GM12878 (cell line): ENCODE measurements at regions of chr14 and their contacts with region 1.

Region 1: GRCh38 chr14:98189062-98189461 is 1082.9 kb downstream of the BCL11B start:
- DNase-seq: no peak
- ATAC-seq: no peak
- H3K4me3 ChIP-seq: no peak overlapping the region
- H3K27ac ChIP-seq: no peak overlapping the region
- H3K4me1 ChIP-seq: no peaks in the 10 kb centered on the region
- H3K27me3 ChIP-seq: no peaks in the 10 kb centered on the region
- CTCF ChIP-seq: no peak
- EP300 ChIP-seq: no peak
- POLR2A ChIP-seq: no peak
- RAD21 ChIP-seq: no peak

Region 2: DNA sequence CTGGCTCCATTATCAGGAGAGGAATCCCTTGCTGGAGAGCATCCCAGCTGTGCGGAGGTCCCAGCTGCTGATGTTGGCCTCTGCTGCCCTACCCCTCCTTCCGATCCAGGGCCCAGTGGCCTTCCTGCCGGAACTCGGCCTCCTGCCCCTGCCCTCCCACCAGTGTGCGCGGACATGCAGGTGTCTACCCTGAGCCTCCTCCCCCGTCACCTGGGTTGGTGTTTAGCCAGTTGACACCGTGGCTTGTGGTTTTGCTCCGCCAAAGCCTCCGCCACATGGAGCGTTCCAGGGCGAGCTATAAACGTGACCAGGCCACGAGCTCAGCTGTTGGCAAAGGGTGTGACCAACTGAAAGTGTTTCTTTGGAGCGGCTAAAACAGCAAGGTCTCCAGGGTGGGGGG is 21.4 kb before region 1 on chr14:
- CTCF ChIA-PET with region 1: interaction called, 6 read pairs
- POLR2A ChIA-PET with region 1: interaction called, 10 read pairs
- RAD21 ChIA-PET with region 1: interaction called, 110 read pairs
- SMC1A ChIA-PET with region 1: interaction called, 24 read pairs
- in situ Hi-C with region 1: no loop called
- intact Hi-C with region 1: no loop called
- DNase-seq: no peak
- ATAC-seq: no peak
- H3K4me3 ChIP-seq: no peak overlapping the region
- H3K27ac ChIP-seq: no peak overlapping the region
- H3K4me1 ChIP-seq: peaks cover 5% of the 10 kb centered on the region
- H3K27me3 ChIP-seq: no peaks in the 10 kb centered on the region
- CTCF ChIP-seq: no peak
- EP300 ChIP-seq: no peak
- POLR2A ChIP-seq: no peak
- RAD21 ChIP-seq: no peak

Region 3: GRCh38 chr14:98203421-98203820 is 14.4 kb after region 1 on chr14:
- CTCF ChIA-PET with region 1: interaction called, 4 read pairs
- POLR2A ChIA-PET with region 1: interaction called, 14 read pairs
- RAD21 ChIA-PET with region 1: interaction called, 309 read pairs
- SMC1A ChIA-PET with region 1: interaction called, 47 read pairs
- in situ Hi-C with region 1: no loop called
- intact Hi-C with region 1: no loop called
- DNase-seq: no peak
- ATAC-seq: no peak
- H3K4me3 ChIP-seq: no peak overlapping the region
- H3K27ac ChIP-seq: no peak overlapping the region
- H3K4me1 ChIP-seq: peaks cover 3% of the 10 kb centered on the region
- H3K27me3 ChIP-seq: no peaks in the 10 kb centered on the region
- CTCF ChIP-seq: no peak
- EP300 ChIP-seq: no peak
- POLR2A ChIP-seq: no peak
- RAD21 ChIP-seq: no peak

Region 4: GRCh38 chr14:98210045-98210672 is 21.1 kb after region 1 on chr14:
- CTCF ChIA-PET with region 1: interaction called, 4 read pairs
- POLR2A ChIA-PET with region 1: interaction called, 4 read pairs
- RAD21 ChIA-PET with region 1: interaction called, 309 read pairs
- SMC1A ChIA-PET with region 1: interaction called, 22 read pairs
- in situ Hi-C with region 1: no loop called
- intact Hi-C with region 1: no loop called
- DNase-seq: no peak
- ATAC-seq: peak; percentile 47
- H3K4me3 ChIP-seq: no peak overlapping the region
- H3K27ac ChIP-seq: no peak overlapping the region
- H3K4me1 ChIP-seq: peaks cover 7% of the 10 kb centered on the region
- H3K27me3 ChIP-seq: no peaks in the 10 kb centered on the region
- CTCF ChIP-seq: no peak
- EP300 ChIP-seq: no peak
- POLR2A ChIP-seq: no peak
- RAD21 ChIP-seq: 0 out of 2 replicates have a peak, but pooled peaks have one; percentile 0

Region 5: DNA sequence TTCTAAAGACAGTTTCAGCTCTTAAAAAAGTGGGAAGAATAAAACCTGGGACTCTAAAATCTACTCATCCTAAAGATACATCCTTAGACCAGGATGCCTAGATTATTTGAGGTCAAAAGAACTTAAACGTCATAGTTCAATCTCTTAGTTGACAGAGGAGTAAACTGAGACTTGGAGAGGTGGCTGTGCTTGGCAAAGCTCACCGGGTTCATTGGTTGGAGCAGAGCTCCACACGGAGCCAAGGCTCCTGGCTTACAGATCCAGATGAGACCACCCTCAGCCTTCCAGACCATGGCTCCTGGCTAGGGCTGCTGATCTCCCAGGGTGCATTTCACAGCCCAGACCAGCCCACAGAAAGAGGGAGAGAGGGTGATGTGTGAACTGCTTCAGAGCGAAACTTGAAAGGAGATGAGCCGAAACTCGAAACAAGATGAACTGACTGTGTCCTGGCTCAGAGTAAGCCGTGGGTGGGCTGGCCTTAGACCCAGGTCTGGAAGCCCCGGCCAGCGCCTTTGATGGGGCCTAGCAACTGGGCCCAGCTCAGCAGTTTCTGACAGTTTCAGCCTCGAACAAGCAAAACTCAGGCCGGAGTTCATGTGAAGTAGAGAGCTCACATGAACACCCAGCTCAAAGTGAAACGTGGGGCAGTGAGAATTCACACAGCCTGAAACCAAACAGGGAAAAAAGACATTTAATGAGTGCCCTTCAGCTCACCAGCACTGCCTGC is 38.1 kb after region 1 on chr14:
- CTCF ChIA-PET with region 1: no interaction called
- POLR2A ChIA-PET with region 1: interaction called, 3 read pairs
- RAD21 ChIA-PET with region 1: interaction called, 12 read pairs
- SMC1A ChIA-PET with region 1: interaction called, 9 read pairs
- in situ Hi-C with region 1: no loop called
- intact Hi-C with region 1: no loop called
- DNase-seq: peak; percentile 51
- ATAC-seq: peak; percentile 95
- H3K4me3 ChIP-seq: no peak overlapping the region
- H3K27ac ChIP-seq: peak overlapping the region; percentile 75
- H3K4me1 ChIP-seq: peaks cover 5% of the 10 kb centered on the region
- H3K27me3 ChIP-seq: no peaks in the 10 kb centered on the region
- CTCF ChIP-seq: no peak
- EP300 ChIP-seq: peak in 1 of 2 experiments; percentile 54; a peak in 1 of 4 replicates
- POLR2A ChIP-seq: no peak
- RAD21 ChIP-seq: peak; percentile 13; the same call in 1 of the 2 replicates